ENCODE measurements at regions of chr21 and their contacts with region 1.

Region 1: DNA sequence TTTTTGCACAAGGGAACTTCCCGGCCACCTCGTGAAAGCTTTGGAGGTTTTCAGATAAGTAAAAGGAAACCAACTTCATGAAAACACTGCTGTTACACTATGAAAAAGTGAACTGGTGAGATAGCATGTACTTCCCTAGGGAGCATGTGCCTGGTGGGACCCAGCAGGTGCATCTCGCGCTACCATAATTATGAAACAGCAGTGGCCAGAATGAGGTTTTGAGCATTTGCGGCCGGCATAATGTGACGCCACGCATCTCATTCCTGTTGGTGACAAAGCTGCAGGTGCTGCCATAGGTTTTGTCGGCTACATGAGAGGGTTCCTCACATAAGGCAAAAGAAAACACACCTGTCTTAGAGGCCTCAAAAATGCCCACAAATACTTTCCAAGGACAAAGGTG is 1.7 kb downstream of the KRTAP10-3 start:
- DNase-seq: peak; percentile 48

Region 2: DNA sequence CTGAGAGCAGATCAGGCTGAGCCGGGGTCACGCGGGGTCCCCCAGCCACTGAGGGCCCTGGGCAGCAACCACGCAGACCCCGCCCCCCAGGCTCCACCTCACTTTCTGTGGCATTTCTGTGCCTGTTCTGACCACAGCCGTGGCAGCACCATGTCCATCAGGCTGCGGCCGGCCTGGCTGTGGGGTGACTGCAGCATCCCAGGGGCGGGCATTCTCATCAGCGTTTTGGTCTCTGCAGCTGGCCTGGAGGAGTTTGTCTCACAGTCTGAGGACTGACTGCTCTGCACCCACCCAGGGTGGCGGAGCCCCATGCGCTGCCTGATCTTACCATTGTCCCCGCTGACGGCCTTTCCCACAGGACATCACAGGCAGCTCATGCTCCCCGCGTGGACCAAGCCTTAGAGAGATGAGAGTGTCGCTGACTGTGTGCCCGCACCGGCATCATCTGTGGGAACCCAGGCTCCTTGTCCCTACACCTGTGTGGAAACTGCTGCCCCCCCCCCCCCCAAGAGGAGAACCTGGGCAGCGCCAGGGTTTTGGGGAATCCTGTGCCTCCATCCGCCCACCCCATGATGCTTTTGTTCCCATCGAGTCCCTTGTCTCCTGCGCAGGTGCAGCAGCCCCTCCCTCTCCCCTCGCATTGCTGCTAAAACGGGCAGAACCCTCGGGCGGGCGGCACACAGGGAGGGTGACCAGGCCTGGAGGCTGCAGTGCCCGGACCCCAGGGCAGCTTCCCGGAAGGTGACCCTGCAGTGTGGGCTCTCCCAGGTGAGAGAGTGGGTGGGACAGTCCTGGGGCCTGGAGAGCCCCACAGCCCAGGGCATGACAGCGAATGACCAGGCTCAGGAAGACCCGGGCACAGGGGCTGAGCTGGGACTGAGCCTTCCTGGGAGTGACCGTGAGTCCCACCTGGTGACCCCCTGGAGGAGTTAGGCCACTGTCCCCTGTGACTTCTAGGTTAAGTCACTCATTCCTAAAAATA is 18.7 kb before region 1 on chr21:
- intact Hi-C with region 1: loop called in 1 of 2 experiments (anchors 1 kb)
- DNase-seq: peak; percentile 67

Region 3: DNA sequence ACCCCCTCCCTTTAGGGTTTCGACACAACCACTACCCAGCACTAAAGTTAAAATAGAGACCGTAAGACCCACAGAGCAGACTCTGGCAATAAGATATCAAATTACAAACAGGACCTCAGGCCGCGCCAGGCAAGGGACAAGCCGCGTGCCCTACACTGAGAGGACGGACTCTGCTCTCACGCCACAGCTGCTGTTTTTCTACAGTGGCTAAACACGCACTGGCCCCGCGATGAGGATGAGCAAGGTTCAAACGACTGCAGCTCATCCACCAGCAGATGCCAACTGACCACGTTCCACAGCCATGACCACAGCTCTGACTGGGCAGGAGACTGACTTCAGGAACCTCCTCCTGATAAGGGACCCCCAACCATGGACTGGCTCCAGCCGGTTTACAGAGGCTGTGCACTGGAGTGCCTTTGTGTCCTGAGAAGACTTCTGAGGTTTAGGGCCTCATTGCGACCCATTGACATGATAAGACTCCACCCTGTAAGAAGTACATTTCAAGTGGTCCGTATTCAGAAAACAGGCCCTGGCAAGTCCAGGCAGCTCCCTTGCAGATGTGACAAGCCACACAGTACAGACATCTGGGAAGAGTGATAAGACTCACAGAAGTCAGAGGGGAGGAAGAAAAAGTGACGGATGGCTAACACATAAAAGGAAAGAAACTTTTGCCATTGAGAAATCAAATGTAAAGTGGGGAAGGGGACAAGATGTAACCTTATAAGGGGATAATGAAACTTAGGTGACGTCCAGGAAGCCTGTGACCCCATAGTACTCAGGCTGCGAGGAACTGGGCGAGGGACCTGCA is 36.9 kb after region 1 on chr21:
- intact Hi-C with region 1: no loop called
- DNase-seq: peak; percentile 43